Ascending aorta (tissue), 2 donors: ENCODE measurements at regions of chr19 and their contacts with region 1.

Region 1: DNA sequence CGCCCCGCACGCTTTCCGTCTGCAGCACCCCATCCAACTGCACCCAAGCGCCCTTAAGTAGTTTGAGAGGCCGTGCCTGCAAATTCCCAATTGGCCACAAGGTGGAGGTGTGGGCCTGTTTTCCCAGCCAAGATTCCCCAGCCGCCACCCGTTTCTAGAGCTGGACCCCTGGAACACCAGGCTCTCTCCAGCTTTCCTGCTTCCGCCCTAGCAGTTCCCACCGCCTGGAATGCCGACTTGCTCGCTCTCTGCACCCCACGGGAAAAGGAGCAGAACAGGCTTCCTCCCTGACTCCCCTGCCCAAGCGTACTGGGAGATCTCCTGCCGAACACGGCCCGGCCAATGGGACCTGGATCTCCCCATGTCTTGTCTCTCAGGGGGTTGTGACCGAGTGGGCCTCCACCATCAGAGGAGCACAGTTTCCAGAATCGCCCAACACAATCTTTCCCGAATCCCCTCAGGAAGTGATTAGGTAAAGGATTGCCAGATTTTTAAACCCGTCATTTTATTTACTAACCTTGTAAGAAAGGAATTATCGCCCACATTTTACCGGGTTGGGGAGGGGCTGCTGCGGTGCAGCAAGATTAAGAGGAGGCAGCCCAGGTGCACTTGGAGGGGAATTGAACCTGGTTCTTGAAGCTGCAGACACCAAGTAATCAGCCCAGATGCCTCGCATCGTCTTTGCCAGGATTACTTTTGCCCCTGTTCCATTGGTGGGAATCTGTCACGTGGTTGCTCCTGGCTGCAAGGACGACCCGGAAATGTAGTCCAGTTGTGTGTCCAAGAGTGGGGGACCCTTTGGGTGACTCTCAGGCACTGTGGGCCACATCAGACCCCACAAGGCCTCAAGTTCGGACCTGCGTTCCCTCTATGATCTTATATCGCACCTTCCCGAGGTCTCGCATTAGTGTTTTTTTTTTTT is 3.5 kb upstream of the NAPSA start:
- DNase-seq: peak; percentile 61 to 92
- H3K4me3 ChIP-seq: peak overlapping the region; percentile 54 to 75
- H3K27ac ChIP-seq: peak overlapping the region; percentile 41 to 55
- H3K4me1 ChIP-seq: no peaks in the 10 kb centered on the region
- H3K27me3 ChIP-seq: no peaks in the 10 kb centered on the region
- CTCF ChIP-seq: peak; percentile 73 to 92 (median 78)

Region 2: GRCh38 chr19:50357178-50358100 is 11.5 kb before region 1 on chr19:
- intact Hi-C with region 1: loop called (anchors 1 kb)
- DNase-seq: peak; percentile 41 to 90
- H3K4me3 ChIP-seq: peak overlapping the region; percentile 50 to 59
- H3K27ac ChIP-seq: peak overlapping the region; percentile 81 to 86
- H3K4me1 ChIP-seq: peaks cover 0 to 2% of the 10 kb centered on the region in 2 donors
- H3K27me3 ChIP-seq: no peaks in the 10 kb centered on the region
- CTCF ChIP-seq: peak; percentile 80 to 89 (median 85)

Region 3: DNA sequence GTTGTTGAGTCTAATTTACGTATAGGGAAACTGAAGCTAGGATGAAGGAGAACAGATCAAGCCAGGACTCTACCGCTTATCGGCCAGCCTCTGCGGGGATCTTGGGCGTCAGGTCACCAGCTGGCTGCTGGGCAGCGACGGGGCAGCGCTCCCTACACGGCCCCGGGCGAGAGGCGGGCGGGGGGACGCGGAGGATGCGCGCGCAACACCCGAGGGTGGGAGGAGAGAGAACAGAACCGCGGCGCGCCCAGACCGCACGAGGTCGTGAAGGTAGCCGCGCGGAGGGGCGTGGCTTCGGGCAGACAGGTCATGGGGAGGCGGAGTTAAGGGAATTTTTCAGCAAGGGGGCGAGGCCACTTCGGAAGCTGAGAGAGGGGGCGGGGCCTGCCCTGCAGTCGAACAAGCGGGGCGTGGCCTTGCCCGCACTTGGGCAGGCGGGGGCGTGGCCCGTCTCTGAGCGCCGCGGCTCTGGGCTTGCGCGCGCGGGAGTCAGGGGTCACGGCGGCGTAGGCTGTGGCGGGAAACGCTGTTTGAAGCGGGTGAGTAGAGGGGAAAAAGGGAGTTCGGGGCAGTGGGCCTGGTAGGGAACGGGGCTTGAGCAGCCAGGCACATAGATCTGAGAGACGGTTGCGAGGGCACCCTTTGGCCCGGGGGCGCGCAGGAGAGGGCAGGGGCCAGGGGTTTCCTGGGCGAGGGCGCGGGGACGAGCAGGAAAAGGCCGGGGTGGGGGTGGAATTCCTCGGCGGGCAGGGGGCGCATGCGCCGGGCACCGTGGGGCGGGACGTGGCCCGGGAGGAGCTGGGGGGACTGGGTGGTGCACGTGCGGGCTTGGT is 15.2 kb after region 1 on chr19 and contains the start of gene POLD1:
- intact Hi-C with region 1: loop called (anchors 2 kb)
- DNase-seq: peak; percentile 94 to 99
- H3K4me3 ChIP-seq: peak within 1 kb of the TSS; percentile 61 to 76
- H3K27ac ChIP-seq: peak within 1 kb of the TSS; percentile 87 to 88
- H3K4me1 ChIP-seq: peaks cover 8 to 10% of the 10 kb centered on the region in 2 donors
- H3K27me3 ChIP-seq: no peaks in the 10 kb centered on the region
- CTCF ChIP-seq: no peak
- total RNA-seq, gene POLD1: 22.9 TPM

Region 4: GRCh38 chr19:50414864-50415660 is 46.2 kb after region 1 on chr19:
- intact Hi-C with region 1: loop called (anchors 1 kb)
- DNase-seq: peak in 1 of 2 donors; percentile 85
- H3K4me3 ChIP-seq: no peak overlapping the region
- H3K27ac ChIP-seq: no peak overlapping the region
- H3K4me1 ChIP-seq: peaks cover 3 to 6% of the 10 kb centered on the region in 2 donors
- H3K27me3 ChIP-seq: peaks cover 7% of the 10 kb centered on the region
- CTCF ChIP-seq: peak; percentile 72 to 93 (median 89)

Region 5: GRCh38 chr19:50461066-50461875 is 92.4 kb after region 1 on chr19:
- intact Hi-C with region 1: loop called (anchors 2 kb)
- DNase-seq: no peak
- H3K4me3 ChIP-seq: no peak overlapping the region
- H3K27ac ChIP-seq: no peak overlapping the region
- H3K4me1 ChIP-seq: no peaks in the 10 kb centered on the region
- H3K27me3 ChIP-seq: peaks cover 5% of the 10 kb centered on the region
- CTCF ChIP-seq: peak; percentile 53 to 63 (median 57)

Region 6: GRCh38 chr19:50777754-50778303 is 408.9 kb after region 1 on chr19:
- intact Hi-C with region 1: loop called (anchors 1 kb)
- DNase-seq: no peak
- H3K4me3 ChIP-seq: no peak overlapping the region
- H3K27ac ChIP-seq: no peak overlapping the region
- H3K4me1 ChIP-seq: no peaks in the 10 kb centered on the region
- H3K27me3 ChIP-seq: peaks cover 7% of the 10 kb centered on the region
- CTCF ChIP-seq: no peak